ENCODE measurements at regions of chr12 and their contacts with region 1.

Region 1: GRCh38 chr12:85468356-85469157 is 188.5 kb downstream of the ALX1 start:
- DNase-seq: peak in 1 of 2 donors; percentile 25
- H3K4me3 ChIP-seq: no peak overlapping the region
- CTCF ChIP-seq: no peak
- POLR2A ChIP-seq: no peak

Region 2: DNA sequence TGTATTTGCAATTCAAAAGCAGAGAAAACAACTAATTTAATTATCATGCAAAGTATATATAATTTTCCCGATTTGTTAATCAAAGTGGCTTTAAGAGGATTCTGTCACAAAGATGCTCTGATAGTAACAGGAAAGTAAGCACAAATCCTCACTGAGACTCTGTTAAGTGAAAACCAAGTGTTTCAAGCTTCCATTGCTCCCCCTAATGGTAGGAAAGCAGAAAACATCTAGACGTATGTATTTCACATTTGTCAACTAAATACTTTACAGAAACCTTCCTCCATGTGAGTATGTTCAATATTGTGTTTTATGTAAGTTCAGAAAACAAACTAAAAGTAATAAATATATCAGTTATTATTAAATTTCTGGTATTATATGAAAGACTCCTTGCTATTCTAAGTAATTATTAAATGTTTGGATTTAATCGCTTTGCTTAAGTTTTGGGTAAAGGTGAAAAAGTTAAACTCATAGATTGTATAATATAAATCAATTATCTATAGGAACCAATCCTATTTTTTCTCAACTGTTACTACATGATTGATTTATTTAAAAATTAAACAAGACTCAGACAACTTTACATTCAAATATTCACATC is 404.0 kb after region 1 on chr12:
- intact Hi-C with region 1: loop called (anchors 5 kb)
- DNase-seq: no peak
- H3K4me3 ChIP-seq: no peak overlapping the region
- CTCF ChIP-seq: no peak
- POLR2A ChIP-seq: no peak